GM12878 (cell line): ENCODE measurements at regions of chr7 and their contacts with region 1.

Region 1: DNA sequence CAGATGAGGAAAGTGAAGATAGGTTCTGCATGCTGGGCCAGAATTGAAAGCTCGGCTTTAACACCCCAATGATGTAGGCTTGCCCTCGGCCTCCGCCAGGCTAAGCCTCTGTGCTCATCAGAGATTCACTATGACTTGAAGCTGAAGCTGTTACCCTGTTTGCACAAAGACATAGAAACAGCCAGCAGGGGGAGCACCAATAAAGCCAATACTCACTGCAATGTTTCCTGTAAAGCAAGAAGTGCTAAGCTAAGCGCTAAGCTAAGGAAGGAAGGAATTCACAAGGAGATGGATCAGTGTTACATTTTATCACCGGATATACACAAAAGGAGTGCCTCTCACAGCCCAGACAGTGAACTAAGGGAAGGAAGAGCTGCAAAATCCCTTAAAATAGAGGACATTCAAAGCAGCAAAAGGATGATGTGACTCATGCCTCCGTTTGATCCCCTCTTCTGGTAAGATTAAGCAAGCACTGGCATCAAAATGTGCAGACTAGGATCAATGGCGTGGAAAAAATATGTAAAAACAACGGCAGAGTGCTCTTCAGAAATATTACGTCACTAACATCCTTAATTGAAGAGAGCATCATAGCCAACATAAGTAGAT is 153.8 kb downstream of the COBL start:
- DNase-seq: peak; percentile 32
- ATAC-seq: peak; percentile 99
- H3K4me3 ChIP-seq: no peak overlapping the region
- H3K27ac ChIP-seq: no peak overlapping the region
- H3K4me1 ChIP-seq: no peaks in the 10 kb centered on the region
- H3K27me3 ChIP-seq: peaks cover 0 to 1% of the 10 kb centered on the region in 2 experiments; a peak in 2 of 4 replicates
- CTCF ChIP-seq: peak; percentile 82 to 85 (median 83)
- EP300 ChIP-seq: no peak
- POLR2A ChIP-seq: no peak
- RAD21 ChIP-seq: peak; percentile 74

Region 2: GRCh38 chr7:50092579-50093491 is 1070.0 kb before region 1 on chr7 and contains the start of gene ZPBP:
- CTCF ChIA-PET with region 1: interaction called, 35 read pairs
- POLR2A ChIA-PET with region 1: no interaction called
- RAD21 ChIA-PET with region 1: interaction called, 71 read pairs
- SMC1A ChIA-PET with region 1: interaction called, 9 read pairs
- in situ Hi-C with region 1: loop called (anchors 10 kb)
- intact Hi-C with region 1: loop called (anchors 2 kb)
- DNase-seq: peak; percentile 30
- ATAC-seq: peak; percentile 77
- H3K4me3 ChIP-seq: peak within 1 kb of the TSS; percentile 38; the same call in 1 of the 2 replicates
- H3K27ac ChIP-seq: no peak within 1 kb of the TSS
- H3K4me1 ChIP-seq: no peaks in the 10 kb centered on the region
- H3K27me3 ChIP-seq: no peaks in the 10 kb centered on the region
- CTCF ChIP-seq: peak; percentile 54 to 72 (median 68); a peak in 5 of 6 replicates
- EP300 ChIP-seq: no peak
- POLR2A ChIP-seq: peak; percentile 58
- RAD21 ChIP-seq: peak; percentile 95
- polyA plus RNA-seq, gene ZPBP: not detected

Region 3: GRCh38 chr7:50467817-50468610 is 694.8 kb before region 1 on chr7:
- CTCF ChIA-PET with region 1: interaction called, 61 read pairs
- POLR2A ChIA-PET with region 1: no interaction called
- RAD21 ChIA-PET with region 1: interaction called, 27 read pairs
- SMC1A ChIA-PET with region 1: interaction called, 11 read pairs
- in situ Hi-C with region 1: loop called (anchors 10 kb)
- intact Hi-C with region 1: loop called (anchors 1 kb)
- DNase-seq: no peak
- ATAC-seq: peak; percentile 95
- H3K4me3 ChIP-seq: no peak overlapping the region
- H3K27ac ChIP-seq: no peak overlapping the region
- H3K4me1 ChIP-seq: no peaks in the 10 kb centered on the region
- H3K27me3 ChIP-seq: no peaks in the 10 kb centered on the region; a peak in 2 of 4 replicates
- CTCF ChIP-seq: peak; percentile 78 to 90 (median 85)
- EP300 ChIP-seq: no peak
- POLR2A ChIP-seq: no peak
- RAD21 ChIP-seq: peak; percentile 85

Region 4: GRCh38 chr7:50696810-50697582 is 465.8 kb before region 1 on chr7:
- CTCF ChIA-PET with region 1: no interaction called
- POLR2A ChIA-PET with region 1: no interaction called
- RAD21 ChIA-PET with region 1: interaction called, 4 read pairs
- SMC1A ChIA-PET with region 1: no interaction called
- in situ Hi-C with region 1: no loop called
- intact Hi-C with region 1: loop called (anchors 1 kb)
- DNase-seq: no peak
- ATAC-seq: peak; percentile 54; the same call in 2 of the 3 replicates
- H3K4me3 ChIP-seq: no peak overlapping the region
- H3K27ac ChIP-seq: no peak overlapping the region
- H3K4me1 ChIP-seq: no peaks in the 10 kb centered on the region
- H3K27me3 ChIP-seq: peaks cover 0 to 3% of the 10 kb centered on the region in 2 experiments; a peak in 3 of 4 replicates
- CTCF ChIP-seq: peak; percentile 17 to 47 (median 36); a peak in 5 of 6 replicates
- EP300 ChIP-seq: no peak
- POLR2A ChIP-seq: no peak
- RAD21 ChIP-seq: no peak

Region 5: GRCh38 chr7:50836646-50837045 is 326.2 kb before region 1 on chr7:
- CTCF ChIA-PET with region 1: no interaction called
- POLR2A ChIA-PET with region 1: no interaction called
- RAD21 ChIA-PET with region 1: no interaction called
- SMC1A ChIA-PET with region 1: no interaction called
- in situ Hi-C with region 1: no loop called
- intact Hi-C with region 1: no loop called
- DNase-seq: no peak
- ATAC-seq: no peak
- H3K4me3 ChIP-seq: no peak overlapping the region
- H3K27ac ChIP-seq: no peak overlapping the region
- H3K4me1 ChIP-seq: no peaks in the 10 kb centered on the region
- H3K27me3 ChIP-seq: no peaks in the 10 kb centered on the region
- CTCF ChIP-seq: no peak
- EP300 ChIP-seq: no peak
- POLR2A ChIP-seq: no peak
- RAD21 ChIP-seq: no peak

Region 6: DNA sequence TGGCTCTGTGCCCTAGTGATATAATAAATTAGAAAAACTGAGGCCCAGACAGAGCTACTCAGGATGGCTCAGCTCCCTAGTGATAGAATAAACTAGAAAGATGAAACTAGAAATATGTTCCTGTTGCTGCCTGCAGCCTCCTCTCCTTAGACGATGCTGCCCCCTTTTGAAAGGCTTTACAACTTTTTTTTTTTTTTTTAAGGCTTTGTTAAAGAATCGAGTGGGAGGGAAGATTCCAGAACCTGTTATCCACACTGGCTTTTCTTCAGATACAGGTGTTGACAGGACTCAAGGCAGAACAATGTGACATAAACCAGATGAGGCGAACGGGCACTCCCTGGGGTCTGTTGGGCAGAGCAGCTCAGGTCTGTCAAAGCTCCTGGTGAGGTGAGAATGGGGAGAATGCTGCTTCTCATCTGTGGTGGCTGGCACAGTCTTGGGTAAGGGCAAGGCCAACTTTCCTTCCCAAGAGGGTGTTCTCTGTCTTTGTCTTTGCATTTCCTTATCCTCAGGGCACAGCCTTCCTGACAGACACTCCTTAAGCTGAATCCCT is 21.3 kb before region 1 on chr7:
- CTCF ChIA-PET with region 1: interaction called, 16 read pairs
- POLR2A ChIA-PET with region 1: no interaction called
- RAD21 ChIA-PET with region 1: interaction called, 5 read pairs
- SMC1A ChIA-PET with region 1: interaction called, 3 read pairs
- in situ Hi-C with region 1: no loop called
- intact Hi-C with region 1: no loop called
- DNase-seq: no peak
- ATAC-seq: no peak
- H3K4me3 ChIP-seq: no peak overlapping the region
- H3K27ac ChIP-seq: no peak overlapping the region
- H3K4me1 ChIP-seq: no peaks in the 10 kb centered on the region
- H3K27me3 ChIP-seq: no peaks in the 10 kb centered on the region
- CTCF ChIP-seq: peak in 2 of 3 experiments; percentile 25 to 30; a peak in 3 of 6 replicates
- EP300 ChIP-seq: no peak
- POLR2A ChIP-seq: no peak
- RAD21 ChIP-seq: peak; percentile 55

Region 7: GRCh38 chr7:51366930-51367613 is 204.2 kb after region 1 on chr7:
- CTCF ChIA-PET with region 1: interaction called, 84 read pairs
- POLR2A ChIA-PET with region 1: no interaction called
- RAD21 ChIA-PET with region 1: interaction called, 29 read pairs
- SMC1A ChIA-PET with region 1: interaction called, 18 read pairs
- in situ Hi-C with region 1: loop called (anchors 10 kb)
- intact Hi-C with region 1: loop called (anchors 1 kb)
- DNase-seq: no peak
- ATAC-seq: peak; percentile 85
- H3K4me3 ChIP-seq: no peak overlapping the region
- H3K27ac ChIP-seq: no peak overlapping the region
- H3K4me1 ChIP-seq: no peaks in the 10 kb centered on the region
- H3K27me3 ChIP-seq: no peaks in the 10 kb centered on the region
- CTCF ChIP-seq: peak; percentile 52 to 60 (median 56)
- EP300 ChIP-seq: no peak
- POLR2A ChIP-seq: no peak
- RAD21 ChIP-seq: peak; percentile 67